Transverse colon (tissue), 4 donors: ENCODE measurements at regions of chr18 and their contacts with region 1.

Region 1: DNA sequence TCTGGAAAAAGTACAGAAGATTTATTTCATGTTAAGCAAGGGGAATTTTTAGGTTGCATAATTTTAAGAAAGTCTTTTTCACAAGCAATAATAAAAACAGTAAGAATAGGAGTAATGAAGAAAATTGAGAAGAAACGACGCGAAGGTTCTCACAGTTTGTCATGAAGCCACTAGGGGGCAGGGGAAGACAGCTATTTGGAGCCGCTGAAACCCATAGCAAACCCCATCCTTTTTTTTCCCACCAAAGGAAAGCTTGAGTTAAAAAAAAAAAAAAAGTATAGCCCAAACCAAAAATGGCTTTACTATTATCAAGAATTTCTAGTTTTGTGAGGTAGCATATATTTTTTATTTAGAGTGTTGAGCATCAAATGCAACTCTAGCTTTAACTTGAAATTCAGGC is 300.9 kb downstream of the PHLPP1 start:
- DNase-seq: peak; percentile 37
- H3K4me3 ChIP-seq: no peak overlapping the region
- H3K27ac ChIP-seq: no peak overlapping the region
- H3K4me1 ChIP-seq: peaks cover 0 to 2% (median 0%) of the 10 kb centered on the region in 4 donors
- H3K27me3 ChIP-seq: peaks cover 5% of the 10 kb centered on the region
- CTCF ChIP-seq: peak; percentile 82 to 86 (median 84)
- EP300 ChIP-seq: no peak
- POLR2A ChIP-seq: no peak

Region 2: GRCh38 chr18:63320046-63320689 is 303.9 kb after region 1 on chr18:
- in situ Hi-C with region 1: loop called in 3 of 4 experiments (anchors 5 to 10 kb)
- intact Hi-C with region 1: loop called (anchors 2 kb)
- DNase-seq: peak; percentile 90
- H3K4me3 ChIP-seq: peak overlapping the region; percentile 22 to 89 (median 72)
- H3K27ac ChIP-seq: peak overlapping the region; percentile 91 to 94 (median 92)
- H3K4me1 ChIP-seq: peaks cover 3 to 39% (median 24%) of the 10 kb centered on the region in 4 donors
- H3K27me3 ChIP-seq: no peaks in the 10 kb centered on the region
- CTCF ChIP-seq: no peak
- EP300 ChIP-seq: no peak
- POLR2A ChIP-seq: peak; percentile 28

Region 3: GRCh38 chr18:63339920-63340484 is 323.7 kb after region 1 on chr18:
- in situ Hi-C with region 1: loop called in 1 of 4 experiments (anchors 10 kb)
- intact Hi-C with region 1: no loop called
- DNase-seq: no peak
- H3K4me3 ChIP-seq: no peak overlapping the region
- H3K27ac ChIP-seq: no peak overlapping the region
- H3K4me1 ChIP-seq: peaks cover 0 to 7% (median 6%) of the 10 kb centered on the region in 4 donors
- H3K27me3 ChIP-seq: no peaks in the 10 kb centered on the region
- CTCF ChIP-seq: peak in 4 of 5 experiments; percentile 13 to 45 (median 40)
- EP300 ChIP-seq: no peak
- POLR2A ChIP-seq: no peak

Region 4: DNA sequence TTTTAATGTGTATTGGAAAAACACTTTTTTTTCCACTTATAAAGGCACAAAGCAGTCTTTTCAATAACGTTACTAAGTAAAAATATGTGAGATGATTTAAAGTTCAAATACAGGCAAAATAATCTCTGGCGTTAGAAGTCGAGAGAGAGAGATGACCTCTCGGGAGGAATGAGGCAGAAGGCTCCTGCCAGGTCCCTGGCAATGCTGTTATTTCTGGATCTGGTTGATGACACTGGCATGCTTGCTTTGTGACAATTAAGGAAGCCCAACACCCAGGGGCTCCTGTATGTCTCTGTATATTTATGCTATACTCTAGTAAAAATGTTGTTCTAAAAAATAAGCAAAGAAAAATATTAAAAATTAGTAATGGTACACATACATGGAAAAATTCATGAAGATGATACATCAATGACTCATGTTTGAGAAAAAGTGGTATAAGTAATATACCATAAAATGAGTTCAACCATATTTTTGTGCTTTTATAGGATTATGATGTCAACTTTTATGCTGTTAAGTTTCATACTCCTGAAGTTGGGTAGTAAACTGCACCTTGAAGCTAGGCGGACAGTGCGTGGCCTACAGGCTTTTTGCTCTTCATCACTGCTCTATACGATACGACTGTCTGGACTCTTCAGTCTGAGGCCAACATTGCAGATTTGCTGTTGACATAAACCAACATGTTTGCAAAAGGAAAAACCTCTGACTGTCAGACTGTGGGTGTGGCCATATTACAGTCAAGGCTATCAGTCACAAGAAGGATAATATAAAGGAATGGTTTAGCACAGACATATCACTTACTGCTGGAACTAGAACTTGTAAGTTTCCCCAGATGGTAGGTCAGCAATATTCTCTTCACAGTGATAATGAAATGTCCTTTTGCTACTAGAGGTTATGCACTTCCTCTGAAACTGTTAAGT is 386.2 kb after region 1 on chr18:
- in situ Hi-C with region 1: no loop called
- intact Hi-C with region 1: no loop called
- DNase-seq: no peak
- H3K4me3 ChIP-seq: no peak overlapping the region
- H3K27ac ChIP-seq: no peak overlapping the region
- H3K4me1 ChIP-seq: peaks cover 0 to 8% (median 3%) of the 10 kb centered on the region in 4 donors
- H3K27me3 ChIP-seq: no peaks in the 10 kb centered on the region
- CTCF ChIP-seq: no peak
- EP300 ChIP-seq: no peak
- POLR2A ChIP-seq: no peak

Region 5: DNA sequence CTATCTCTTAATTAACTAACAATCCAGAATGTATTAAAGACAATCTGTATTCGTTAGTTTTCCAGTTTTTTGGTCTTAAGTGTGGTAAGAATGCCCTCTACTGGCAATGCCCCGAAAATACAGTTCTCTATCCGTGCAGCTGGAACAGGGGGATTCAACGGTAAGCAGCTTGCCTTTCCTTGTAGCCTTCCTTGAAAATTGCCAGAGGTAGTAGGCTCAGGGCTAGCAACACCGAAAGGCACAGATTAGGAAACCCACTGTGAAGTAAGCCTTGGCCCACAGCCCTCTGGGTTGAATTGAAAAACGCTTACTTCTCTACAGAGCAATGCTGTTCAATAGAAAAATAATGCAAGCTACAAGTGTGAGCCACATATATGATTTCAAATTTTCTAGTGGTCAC is 423.1 kb after region 1 on chr18:
- in situ Hi-C with region 1: loop called in 3 of 4 experiments (anchors 5 to 25 kb)
- intact Hi-C with region 1: loop called (anchors 10 kb)
- DNase-seq: peak; percentile 52
- H3K4me3 ChIP-seq: no peak overlapping the region
- H3K27ac ChIP-seq: no peak overlapping the region
- H3K4me1 ChIP-seq: peaks cover 0 to 9% (median 4%) of the 10 kb centered on the region in 4 donors
- H3K27me3 ChIP-seq: no peaks in the 10 kb centered on the region
- CTCF ChIP-seq: peak; percentile 74 to 83 (median 79)
- EP300 ChIP-seq: no peak
- POLR2A ChIP-seq: no peak